AG04449 (cell line): ENCODE measurements at regions of chr11 and their contacts with region 1.

Region 1: DNA sequence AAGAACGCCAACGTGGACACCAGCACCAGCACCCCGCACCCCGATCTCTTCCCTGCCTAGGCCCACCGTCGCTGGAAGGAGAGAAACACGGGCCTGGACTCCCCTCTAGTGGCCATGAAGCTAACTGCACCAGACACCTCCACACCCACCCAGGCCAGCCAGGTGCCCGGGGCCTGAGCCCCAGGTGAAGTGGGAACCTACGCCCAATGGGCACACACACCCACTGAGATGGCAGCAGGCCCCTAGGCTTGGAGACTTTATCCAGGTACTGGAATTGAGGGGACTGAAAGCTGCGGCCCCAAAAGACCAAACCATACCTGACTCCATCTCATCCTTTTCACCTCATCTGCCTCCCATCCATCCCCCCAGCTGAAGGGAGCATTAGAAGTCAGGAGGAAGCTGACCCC is 81.0 kb downstream of the BUD13 start:
- DNase-seq: no peak
- H3K4me3 ChIP-seq: no peak overlapping the region
- CTCF ChIP-seq: peak; percentile 89

Region 2: GRCh38 chr11:116217006-116217405 is 474.8 kb before region 1 on chr11:
- CTCF ChIA-PET with region 1: interaction called, 11 read pairs
- POLR2A ChIA-PET with region 1: no interaction called
- DNase-seq: no peak
- H3K4me3 ChIP-seq: no peak overlapping the region
- CTCF ChIP-seq: peak; percentile 62

Region 3: DNA sequence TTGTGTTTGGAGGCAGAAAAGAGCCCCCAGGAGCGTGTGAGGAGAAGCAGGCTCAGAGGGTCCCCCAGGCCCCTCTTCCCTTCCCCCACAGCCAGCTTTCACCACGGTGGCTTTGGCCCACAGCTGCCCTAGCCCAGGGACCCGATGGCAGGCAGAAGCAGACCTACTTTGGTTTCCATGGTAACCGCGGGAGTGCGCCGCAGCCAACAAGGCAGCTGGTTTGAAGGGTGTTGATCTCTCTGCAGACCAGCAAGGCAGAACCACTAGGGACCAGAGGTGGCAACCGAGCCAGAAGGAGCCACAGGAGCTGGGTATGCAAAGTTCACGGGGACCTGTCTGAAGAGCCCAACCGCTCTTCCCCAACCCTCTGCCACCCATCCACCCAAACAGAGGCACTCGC is 11.6 kb after region 1 on chr11:
- CTCF ChIA-PET with region 1: interaction called, 22 read pairs
- POLR2A ChIA-PET with region 1: no interaction called
- DNase-seq: no peak
- H3K4me3 ChIP-seq: no peak overlapping the region
- CTCF ChIP-seq: no peak

Region 4: GRCh38 chr11:116927163-116927974 is 235.6 kb after region 1 on chr11:
- CTCF ChIA-PET with region 1: no interaction called
- POLR2A ChIA-PET with region 1: no interaction called
- DNase-seq: no peak
- H3K4me3 ChIP-seq: no peak overlapping the region
- CTCF ChIP-seq: peak; percentile 24